Panc1 (cell line): ENCODE measurements at regions of chr3 and their contacts with region 1.

Region 1: GRCh38 chr3:44762170-44762677 is 630 bp downstream of the KIF15 start:
- DNase-seq: peak; percentile 4
- ATAC-seq: no peak
- H3K4me3 ChIP-seq: peak overlapping the region; percentile 81 to 87
- H3K27ac ChIP-seq: peak overlapping the region; percentile 92
- H3K4me1 ChIP-seq: no peaks in the 10 kb centered on the region
- H3K27me3 ChIP-seq: no peaks in the 10 kb centered on the region
- CTCF ChIP-seq: no peak

Region 2: DNA sequence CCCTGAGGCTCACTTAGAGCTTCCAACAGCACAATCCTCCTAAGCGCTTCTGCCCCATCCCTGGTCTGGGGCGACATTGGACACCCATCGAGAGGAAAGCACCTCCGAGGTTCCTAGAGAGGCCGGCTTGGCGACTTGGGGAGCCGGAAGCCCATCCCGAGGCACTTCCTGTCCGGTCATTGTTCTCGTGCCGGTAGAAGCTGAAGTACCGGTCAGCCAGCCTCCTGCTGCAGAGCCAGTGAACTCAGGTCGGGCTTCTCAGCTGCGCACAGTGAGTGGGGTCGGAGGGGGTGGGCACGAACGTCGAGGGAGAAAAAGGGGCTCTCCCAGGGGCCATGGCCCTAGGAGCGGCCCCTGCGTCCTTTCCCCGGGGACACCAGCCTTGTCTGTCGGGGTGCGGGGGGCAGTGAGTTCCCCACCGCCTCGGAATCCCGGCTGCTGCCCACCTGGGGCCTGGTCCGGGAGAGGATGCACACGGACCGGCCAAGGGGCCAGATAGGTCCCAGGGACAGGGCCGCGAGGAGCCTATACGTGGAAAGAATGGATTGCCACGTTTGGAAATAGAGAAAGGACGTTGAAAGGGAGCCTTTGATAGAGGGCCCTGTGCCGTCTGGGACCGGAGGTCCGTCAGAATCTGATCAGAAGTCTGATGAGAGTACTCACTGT is 113.5 kb before region 1 on chr3 and contains the start of gene ZNF35:
- CTCF ChIA-PET with region 1: no interaction called
- POLR2A ChIA-PET with region 1: interaction called, 20 read pairs
- in situ Hi-C with region 1: no loop called
- intact Hi-C with region 1: no loop called
- DNase-seq: peak; percentile 46
- ATAC-seq: peak; percentile 99
- H3K4me3 ChIP-seq: peak within 1 kb of the TSS; percentile 59 to 89
- H3K27ac ChIP-seq: peak within 1 kb of the TSS; percentile 88
- H3K4me1 ChIP-seq: no peaks in the 10 kb centered on the region
- H3K27me3 ChIP-seq: no peaks in the 10 kb centered on the region
- CTCF ChIP-seq: no peak
- total RNA-seq, gene ZNF35: 9.3 TPM

Region 3: GRCh38 chr3:44712455-44713075 is 49.7 kb before region 1 on chr3 and contains the start of gene ZNF502:
- CTCF ChIA-PET with region 1: interaction called, 11 read pairs
- POLR2A ChIA-PET with region 1: no interaction called
- in situ Hi-C with region 1: no loop called
- intact Hi-C with region 1: no loop called
- DNase-seq: no peak
- ATAC-seq: no peak
- H3K4me3 ChIP-seq: peak within 1 kb of the TSS in 1 of 2 experiments; percentile 41; a peak in 1 of 4 replicates
- H3K27ac ChIP-seq: no peak within 1 kb of the TSS
- H3K4me1 ChIP-seq: no peaks in the 10 kb centered on the region
- H3K27me3 ChIP-seq: no peaks in the 10 kb centered on the region
- CTCF ChIP-seq: no peak
- total RNA-seq, gene ZNF502: not detected

Region 4: DNA sequence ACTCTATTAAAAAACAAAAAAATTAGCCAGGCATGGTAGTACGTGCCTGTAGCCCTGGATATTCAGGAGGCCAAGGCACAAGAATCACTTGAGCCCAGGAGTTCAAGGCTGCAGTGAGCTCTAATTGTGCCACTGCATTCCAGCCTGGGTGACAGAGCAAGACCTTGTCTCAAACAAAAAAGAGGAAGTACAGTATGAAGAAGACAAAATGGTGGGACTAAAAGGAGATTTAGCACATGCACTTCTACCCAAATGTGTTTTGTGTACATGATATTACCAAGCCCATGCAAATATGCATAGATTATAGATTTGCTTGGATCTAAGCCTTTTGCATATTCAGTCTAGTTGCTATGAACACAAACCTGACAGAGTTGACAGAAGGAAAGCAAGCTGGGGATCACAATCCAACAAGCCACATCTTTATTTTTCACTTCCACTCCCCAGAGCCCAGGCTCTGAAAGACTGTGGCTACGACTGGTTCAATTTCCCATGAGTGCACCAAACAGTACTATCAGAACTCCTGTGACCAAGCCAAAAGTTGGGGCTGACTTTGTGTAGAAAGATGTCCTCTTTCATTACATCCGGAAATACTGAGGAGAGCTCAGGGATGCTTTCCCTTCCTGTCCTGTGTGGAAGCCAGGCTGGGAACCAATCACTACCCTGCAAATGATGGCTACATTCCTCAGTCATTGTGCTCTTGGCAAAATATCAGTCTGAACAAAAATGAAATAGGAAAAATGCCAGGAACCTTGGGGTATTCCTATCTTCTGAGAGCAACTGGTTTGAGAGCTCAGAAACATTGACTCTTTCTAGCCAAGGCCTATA is 161.6 kb after region 1 on chr3:
- CTCF ChIA-PET with region 1: no interaction called
- POLR2A ChIA-PET with region 1: no interaction called
- in situ Hi-C with region 1: no loop called
- intact Hi-C with region 1: no loop called
- DNase-seq: no peak
- ATAC-seq: no peak
- H3K4me3 ChIP-seq: no peak overlapping the region
- H3K27ac ChIP-seq: no peak overlapping the region
- H3K4me1 ChIP-seq: no peaks in the 10 kb centered on the region
- H3K27me3 ChIP-seq: no peaks in the 10 kb centered on the region
- CTCF ChIP-seq: no peak